B cell (primary cell): ENCODE measurements at regions of chr7 and their contacts with region 1.

Region 1: GRCh38 chr7:20152511-20152910 is 64.7 kb downstream of the MACC1 start:
- DNase-seq: no peak
- ATAC-seq: no peak
- H3K4me3 ChIP-seq: no peak overlapping the region
- H3K4me3 Mint-ChIP-seq: no peak overlapping the region
- H3K27ac ChIP-seq: no peak overlapping the region
- H3K27ac Mint-ChIP-seq: no peak overlapping the region
- H3K4me1 ChIP-seq: peaks cover 10 to 20% of the 10 kb centered on the region in 2 donors
- H3K4me1 Mint-ChIP-seq: peaks cover 25% of the 10 kb centered on the region
- H3K27me3 ChIP-seq: no peaks in the 10 kb centered on the region
- H3K27me3 Mint-ChIP-seq: no peaks in the 10 kb centered on the region
- CTCF ChIP-seq: no peak

Region 2: GRCh38 chr7:18948521-18948920 is 1204.0 kb before region 1 on chr7:
- CTCF ChIA-PET with region 1: no interaction called
- POLR2A ChIA-PET with region 1: no interaction called
- intact Hi-C with region 1: no loop called
- DNase-seq: no peak
- ATAC-seq: no peak
- H3K4me3 ChIP-seq: no peak overlapping the region
- H3K4me3 Mint-ChIP-seq: no peak overlapping the region
- H3K27ac ChIP-seq: no peak overlapping the region
- H3K27ac Mint-ChIP-seq: no peak overlapping the region
- H3K4me1 ChIP-seq: no peaks in the 10 kb centered on the region
- H3K4me1 Mint-ChIP-seq: no peaks in the 10 kb centered on the region
- H3K27me3 ChIP-seq: no peaks in the 10 kb centered on the region
- H3K27me3 Mint-ChIP-seq: no peaks in the 10 kb centered on the region
- CTCF ChIP-seq: no peak

Region 3: GRCh38 chr7:20075440-20075839 is 77.1 kb before region 1 on chr7:
- CTCF ChIA-PET with region 1: no interaction called
- POLR2A ChIA-PET with region 1: no interaction called
- intact Hi-C with region 1: no loop called
- DNase-seq: no peak
- ATAC-seq: no peak
- H3K4me3 ChIP-seq: no peak overlapping the region
- H3K4me3 Mint-ChIP-seq: no peak overlapping the region
- H3K27ac ChIP-seq: no peak overlapping the region
- H3K27ac Mint-ChIP-seq: no peak overlapping the region
- H3K4me1 ChIP-seq: no peaks in the 10 kb centered on the region
- H3K4me1 Mint-ChIP-seq: no peaks in the 10 kb centered on the region
- H3K27me3 ChIP-seq: no peaks in the 10 kb centered on the region
- H3K27me3 Mint-ChIP-seq: no peaks in the 10 kb centered on the region
- CTCF ChIP-seq: no peak

Region 4: DNA sequence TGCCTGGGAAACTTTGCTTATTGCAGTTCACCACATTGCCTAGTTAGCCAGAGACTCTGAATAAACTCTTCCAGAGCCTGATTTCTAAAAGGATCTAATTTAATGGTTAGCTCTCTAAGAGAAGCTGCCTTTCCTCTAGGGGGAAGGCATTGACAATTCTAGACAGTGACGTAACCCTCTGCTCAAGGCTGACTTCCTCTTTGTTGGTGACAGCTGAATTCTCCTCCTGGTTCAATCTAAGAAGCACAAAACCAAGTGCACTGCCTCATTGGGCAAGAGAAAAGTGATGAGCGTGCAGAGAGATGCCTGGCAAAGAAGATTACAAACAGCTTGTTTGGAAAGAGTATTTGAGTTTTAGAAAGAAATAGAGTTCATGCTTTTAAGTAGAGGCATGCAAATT is 38.0 kb before region 1 on chr7:
- CTCF ChIA-PET with region 1: no interaction called
- POLR2A ChIA-PET with region 1: no interaction called
- intact Hi-C with region 1: loop called (anchors 5 kb)
- DNase-seq: peak; percentile 85
- ATAC-seq: peak; percentile 91
- H3K4me3 ChIP-seq: no peak overlapping the region
- H3K4me3 Mint-ChIP-seq: peak overlapping the region; percentile 60
- H3K27ac ChIP-seq: peak overlapping the region in 1 of 2 donors; percentile 62
- H3K27ac Mint-ChIP-seq: peak overlapping the region; percentile 69
- H3K4me1 ChIP-seq: peaks cover 19 to 23% of the 10 kb centered on the region in 2 donors
- H3K4me1 Mint-ChIP-seq: peaks cover 23% of the 10 kb centered on the region
- H3K27me3 ChIP-seq: no peaks in the 10 kb centered on the region
- H3K27me3 Mint-ChIP-seq: no peaks in the 10 kb centered on the region
- CTCF ChIP-seq: peak; percentile 27

Region 5: GRCh38 chr7:20193227-20193777 is 40.8 kb after region 1 on chr7:
- CTCF ChIA-PET with region 1: no interaction called
- POLR2A ChIA-PET with region 1: no interaction called
- intact Hi-C with region 1: loop called (anchors 5 kb)
- DNase-seq: peak; percentile 41
- ATAC-seq: peak; percentile 31
- H3K4me3 ChIP-seq: no peak overlapping the region
- H3K4me3 Mint-ChIP-seq: no peak overlapping the region
- H3K27ac ChIP-seq: peak overlapping the region; percentile 55 to 75
- H3K27ac Mint-ChIP-seq: peak overlapping the region; percentile 82
- H3K4me1 ChIP-seq: peaks cover 21% of the 10 kb centered on the region in 2 donors
- H3K4me1 Mint-ChIP-seq: peaks cover 36% of the 10 kb centered on the region
- H3K27me3 ChIP-seq: no peaks in the 10 kb centered on the region
- H3K27me3 Mint-ChIP-seq: no peaks in the 10 kb centered on the region
- CTCF ChIP-seq: no peak